A673 (cell line): ENCODE measurements at regions of chr19 and their contacts with region 1.

Region 1: DNA sequence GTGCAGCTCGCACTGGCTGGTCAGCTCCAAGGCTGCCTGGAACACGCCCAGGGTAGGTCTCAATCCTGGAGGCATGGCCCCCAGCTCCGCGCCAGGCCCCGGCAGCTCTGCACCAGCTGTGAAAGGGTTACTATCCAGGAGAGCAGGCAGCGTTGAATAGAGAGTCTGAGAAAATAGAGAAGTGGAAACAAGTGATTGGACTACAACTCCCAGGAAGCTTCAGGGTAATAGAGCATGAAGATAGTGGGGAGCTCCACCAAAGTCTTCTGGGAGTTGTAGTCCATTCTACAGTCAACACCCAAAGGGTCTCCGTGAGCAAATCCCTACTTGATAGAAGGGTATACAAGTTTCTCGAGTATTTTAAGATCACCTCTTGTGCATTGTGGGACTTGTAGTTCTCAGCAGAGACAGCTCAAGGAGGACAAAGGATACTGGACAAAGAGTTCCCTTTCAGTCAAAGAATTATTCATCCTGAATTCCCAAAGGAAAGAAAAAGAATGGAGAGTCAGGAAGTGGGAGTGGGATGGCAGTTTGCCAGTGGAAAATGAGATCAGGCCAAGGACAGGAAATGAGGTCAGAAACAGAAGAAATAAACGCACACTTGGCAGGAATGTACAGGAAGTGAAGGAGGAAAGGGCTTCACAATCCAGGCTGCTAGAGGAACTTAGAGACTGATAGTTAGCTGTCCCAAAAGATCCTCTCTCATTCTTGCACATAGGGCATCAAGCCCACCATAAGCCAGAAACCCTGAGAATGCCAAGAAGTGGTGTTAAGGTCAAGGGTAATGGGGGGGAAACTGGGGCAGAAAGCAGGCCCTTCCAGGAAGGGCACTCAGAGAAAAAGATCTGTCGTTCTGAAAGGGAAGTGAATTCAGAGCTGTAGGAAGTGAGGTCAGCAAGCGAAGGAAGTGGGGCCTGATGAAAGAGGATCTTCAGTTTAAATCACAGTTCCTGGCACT is 5.5 kb upstream of the MAMSTR start:
- DNase-seq: peak; percentile 98
- H3K4me3 ChIP-seq: peak overlapping the region; percentile 5
- H3K27ac ChIP-seq: peak overlapping the region; percentile 99
- H3K4me1 ChIP-seq: peaks cover 43% of the 10 kb centered on the region
- H3K27me3 ChIP-seq: no peaks in the 10 kb centered on the region
- CTCF ChIP-seq: no peak

Region 2: DNA sequence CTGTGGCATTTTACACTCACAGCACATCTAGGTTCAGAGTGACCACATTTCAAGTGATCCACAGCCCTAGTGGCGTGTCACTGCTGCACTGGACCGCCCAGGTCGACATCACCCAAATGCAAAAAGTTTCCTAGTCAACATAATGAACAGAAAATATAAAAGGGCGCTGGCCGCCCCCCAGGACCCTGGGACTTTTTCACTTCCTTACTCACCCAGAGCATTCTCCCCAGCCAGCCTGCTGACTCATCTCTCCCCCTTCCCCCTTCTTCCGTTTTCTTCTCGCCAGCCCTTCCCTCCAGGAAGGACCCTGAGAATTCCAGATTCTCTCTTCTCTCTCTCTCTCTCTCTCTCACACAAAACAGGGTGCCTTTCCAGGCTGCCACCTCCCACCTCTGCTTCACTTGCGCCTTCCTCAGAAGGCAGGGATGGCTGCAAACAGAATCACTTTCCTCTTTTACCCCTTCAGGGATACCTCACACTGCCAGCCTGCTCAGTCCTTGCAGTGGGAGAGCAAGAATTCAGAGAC is 300.3 kb before region 1 on chr19:
- CTCF ChIA-PET with region 1: no interaction called
- POLR2A ChIA-PET with region 1: no interaction called
- intact Hi-C with region 1: no loop called
- DNase-seq: peak; percentile 75
- H3K4me3 ChIP-seq: no peak overlapping the region
- H3K27ac ChIP-seq: peak overlapping the region; percentile 92
- H3K4me1 ChIP-seq: peaks cover 16% of the 10 kb centered on the region
- H3K27me3 ChIP-seq: no peaks in the 10 kb centered on the region
- CTCF ChIP-seq: no peak

Region 3: GRCh38 chr19:48713864-48714758 is 11.0 kb before region 1 on chr19:
- CTCF ChIA-PET with region 1: interaction called, 16 read pairs
- POLR2A ChIA-PET with region 1: no interaction called
- intact Hi-C with region 1: no loop called
- DNase-seq: peak; percentile 100
- H3K4me3 ChIP-seq: peak overlapping the region; percentile 66
- H3K27ac ChIP-seq: peak overlapping the region; percentile 88
- H3K4me1 ChIP-seq: peaks cover 33% of the 10 kb centered on the region
- H3K27me3 ChIP-seq: no peaks in the 10 kb centered on the region
- CTCF ChIP-seq: no peak

Region 4: GRCh38 chr19:48746738-48747575 is 21.9 kb after region 1 on chr19 and contains the start of gene IZUMO1:
- CTCF ChIA-PET with region 1: no interaction called
- POLR2A ChIA-PET with region 1: interaction called, 10 read pairs
- intact Hi-C with region 1: no loop called
- DNase-seq: peak; percentile 95
- H3K4me3 ChIP-seq: peak within 1 kb of the TSS; percentile 60
- H3K27ac ChIP-seq: peak within 1 kb of the TSS; percentile 82
- H3K4me1 ChIP-seq: peaks cover 5% of the 10 kb centered on the region
- H3K27me3 ChIP-seq: no peaks in the 10 kb centered on the region
- CTCF ChIP-seq: no peak
- total RNA-seq, gene IZUMO1: not detected in 2 replicates